ENCODE measurements at regions of chr10 and their contacts with region 1.

Region 1: GRCh38 chr10:44974628-44975431 is 3.8 kb downstream of the DEPP1 start:
- DNase-seq: peak; percentile 80
- ATAC-seq: peak; percentile 76 to 78

Region 2: GRCh38 chr10:44878706-44879530 is 95.9 kb before region 1 on chr10:
- intact Hi-C with region 1: loop called in 1 of 2 experiments (anchors 10 kb)
- DNase-seq: peak; percentile 89
- ATAC-seq: peak; percentile 95

Region 3: GRCh38 chr10:44932517-44933450 is 42.0 kb before region 1 on chr10:
- intact Hi-C with region 1: loop called (anchors 1 to 5 kb)
- DNase-seq: peak; percentile 93
- ATAC-seq: peak; percentile 87 to 92

Measured in left cardiac atrium (tissue), 4 donors.